HepG2 (cell line): ENCODE measurements at regions of chr19 and their contacts with region 1.

Region 1: GRCh38 chr19:58558623-58559274 is 338 bp upstream of the UBE2M start:
- DNase-seq: peak; percentile 95
- ATAC-seq: peak; percentile 66
- H3K4me3 ChIP-seq: peak overlapping the region; percentile 71 to 84 (median 84)
- H3K27ac ChIP-seq: peak overlapping the region; percentile 96
- H3K4me1 ChIP-seq: peaks cover 34% of the 10 kb centered on the region
- H3K27me3 ChIP-seq: no peaks in the 10 kb centered on the region
- CTCF ChIP-seq: 0 out of 2 replicates have a peak, but pooled peaks have one; percentile 9
- EP300 ChIP-seq: no peak
- POLR2A ChIP-seq: peak in 1 of 2 experiments; percentile 75; a peak in 1 of 4 replicates
- RAD21 ChIP-seq: peak; percentile 52

Region 2: DNA sequence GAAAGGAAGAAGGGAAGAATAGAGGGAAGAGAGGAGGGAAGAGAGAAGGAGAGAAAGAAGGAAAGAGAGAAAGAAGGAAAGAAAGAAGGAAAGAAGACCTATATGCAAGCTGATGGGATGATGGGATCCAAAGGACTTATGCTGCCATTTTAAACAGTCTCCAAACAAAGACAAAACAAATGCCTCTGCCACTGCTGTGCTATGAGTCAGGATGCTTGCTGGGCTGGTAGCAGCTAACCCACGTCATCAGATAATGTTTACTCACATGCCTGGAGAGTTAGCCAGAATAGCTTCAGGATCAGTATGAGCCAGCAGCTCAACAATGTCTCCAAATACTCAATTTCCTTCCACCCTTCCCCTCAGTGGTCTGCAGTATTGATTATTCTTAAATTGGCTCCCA is 387.9 kb before region 1 on chr19:
- CTCF ChIA-PET with region 1: no interaction called
- POLR2A ChIA-PET with region 1: no interaction called
- in situ Hi-C with region 1: no loop called
- intact Hi-C with region 1: no loop called
- DNase-seq: no peak
- ATAC-seq: no peak
- H3K4me3 ChIP-seq: no peak overlapping the region
- H3K27ac ChIP-seq: no peak overlapping the region
- H3K4me1 ChIP-seq: no peaks in the 10 kb centered on the region
- H3K27me3 ChIP-seq: no peaks in the 10 kb centered on the region
- CTCF ChIP-seq: no peak
- EP300 ChIP-seq: no peak
- POLR2A ChIP-seq: no peak
- RAD21 ChIP-seq: no peak

Region 3: DNA sequence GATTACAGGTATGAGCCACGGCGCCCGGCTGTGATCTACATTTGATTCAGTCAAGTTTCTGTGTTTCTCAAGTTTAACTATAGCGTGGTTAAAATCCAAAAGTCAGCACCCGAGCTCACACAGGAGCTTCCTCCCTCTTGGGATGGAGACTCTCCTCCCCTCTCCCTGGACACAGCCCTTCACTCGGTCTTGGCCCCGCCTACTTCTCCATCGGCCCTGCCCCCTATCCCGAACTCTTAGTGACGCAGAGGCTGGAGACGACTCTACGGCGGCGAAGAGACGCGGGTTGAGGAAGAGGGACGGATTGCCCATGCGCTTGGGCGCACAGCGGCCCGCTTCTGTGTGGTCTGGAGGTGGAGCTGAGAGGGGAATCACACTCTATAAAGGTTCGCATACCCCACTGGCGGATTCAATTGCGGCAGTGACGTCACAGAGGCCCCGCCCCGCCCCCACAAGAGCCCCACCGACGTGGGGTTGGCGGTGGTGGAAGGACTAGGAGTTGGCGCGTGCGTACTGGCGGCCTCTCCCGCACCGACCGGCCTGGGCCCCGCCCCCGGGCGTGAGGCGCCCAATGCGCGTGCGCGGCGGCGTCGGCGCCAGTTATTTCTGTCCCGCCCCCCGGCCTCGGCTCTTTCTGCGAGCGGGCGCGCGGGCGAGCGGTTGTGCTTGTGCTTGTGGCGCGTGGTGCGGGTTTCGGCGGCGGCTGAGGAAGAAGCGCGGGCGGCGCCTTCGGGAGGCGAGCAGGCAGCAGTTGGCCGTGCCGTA is 14.7 kb before region 1 on chr19 and contains the start of gene TRIM28:
- CTCF ChIA-PET with region 1: no interaction called
- POLR2A ChIA-PET with region 1: interaction called, 58 read pairs
- in situ Hi-C with region 1: no loop called
- intact Hi-C with region 1: no loop called
- DNase-seq: peak; percentile 96
- ATAC-seq: peak; percentile 92
- H3K4me3 ChIP-seq: peak within 1 kb of the TSS; percentile 91 to 99 (median 96)
- H3K27ac ChIP-seq: peak within 1 kb of the TSS; percentile 80
- H3K4me1 ChIP-seq: peaks cover 24% of the 10 kb centered on the region
- H3K27me3 ChIP-seq: no peaks in the 10 kb centered on the region; a peak in 2 of 5 replicates
- CTCF ChIP-seq: no peak
- EP300 ChIP-seq: no peak; a peak in 1 of 4 replicates
- POLR2A ChIP-seq: peak; percentile 85 to 97
- RAD21 ChIP-seq: no peak; the same call in 1 of the 2 replicates
- total RNA-seq, gene TRIM28: 302 and 361 TPM in 2 replicates

Region 4: GRCh38 chr19:58572818-58573657 is 14.3 kb after region 1 on chr19 and contains the start of gene MZF1:
- CTCF ChIA-PET with region 1: no interaction called
- POLR2A ChIA-PET with region 1: interaction called, 36 read pairs
- in situ Hi-C with region 1: no loop called
- intact Hi-C with region 1: no loop called
- DNase-seq: peak; percentile 99
- ATAC-seq: peak; percentile 74
- H3K4me3 ChIP-seq: peak within 1 kb of the TSS; percentile 80 to 86 (median 82)
- H3K27ac ChIP-seq: peak within 1 kb of the TSS; percentile 93
- H3K4me1 ChIP-seq: peaks cover 24% of the 10 kb centered on the region
- H3K27me3 ChIP-seq: no peaks in the 10 kb centered on the region
- CTCF ChIP-seq: peak; percentile 50
- EP300 ChIP-seq: peak in 1 of 2 experiments; percentile 44; a peak in 1 of 4 replicates
- POLR2A ChIP-seq: peak; percentile 23 to 59; a peak in 2 of 4 replicates
- RAD21 ChIP-seq: no peak; the same call in 1 of the 2 replicates
- total RNA-seq, gene MZF1: 1.3 and 3.1 TPM in 2 replicates

Region 5: DNA sequence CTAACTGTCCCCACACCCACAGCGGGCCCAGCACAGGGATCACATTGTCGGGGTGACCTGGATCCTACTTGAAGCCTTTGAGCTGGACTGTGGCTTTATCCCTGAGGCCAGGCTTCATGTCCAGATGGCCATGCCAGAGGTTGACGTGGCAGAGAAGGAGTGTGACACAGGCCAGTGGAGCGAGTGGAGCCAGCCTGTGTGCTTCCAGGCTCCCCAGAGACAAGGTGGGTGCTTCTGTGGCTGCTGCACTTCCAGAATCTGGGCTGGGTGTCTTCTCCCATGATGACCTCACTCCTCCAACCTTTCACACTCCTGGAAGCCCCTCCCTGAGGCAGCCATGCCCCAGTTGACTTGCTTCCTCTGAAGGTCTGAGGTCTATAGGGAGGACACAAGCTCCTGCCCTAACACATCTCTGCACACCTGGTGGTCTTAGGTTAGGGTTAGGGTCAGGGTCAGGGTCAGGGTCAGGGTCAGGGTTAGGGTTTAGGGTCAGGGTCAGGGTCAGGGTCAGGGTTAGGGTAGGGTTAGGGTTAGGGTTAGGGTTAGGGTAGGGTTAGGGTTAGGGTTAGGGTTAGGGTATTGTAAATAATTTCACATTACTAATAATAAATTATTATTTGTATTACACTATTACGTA is 27.5 kb after region 1 on chr19:
- CTCF ChIA-PET with region 1: no interaction called
- POLR2A ChIA-PET with region 1: no interaction called
- in situ Hi-C with region 1: no loop called
- intact Hi-C with region 1: no loop called
- DNase-seq: no peak
- ATAC-seq: no peak
- H3K4me3 ChIP-seq: no peak overlapping the region
- H3K27ac ChIP-seq: no peak overlapping the region
- H3K4me1 ChIP-seq: no peaks in the 10 kb centered on the region
- H3K27me3 ChIP-seq: no peaks in the 10 kb centered on the region
- CTCF ChIP-seq: no peak
- EP300 ChIP-seq: no peak
- POLR2A ChIP-seq: no peak
- RAD21 ChIP-seq: no peak